Activated naive CD4-positive, alpha-beta T cell treated with anti-CD3 and anti-CD28 coated beads, Interleukin-2, amount 10 ng/mL, durations not matched to agents 7 days and 5 days (primary cell): ENCODE measurements at regions of chr11 and their contacts with region 1.

Region 1: DNA sequence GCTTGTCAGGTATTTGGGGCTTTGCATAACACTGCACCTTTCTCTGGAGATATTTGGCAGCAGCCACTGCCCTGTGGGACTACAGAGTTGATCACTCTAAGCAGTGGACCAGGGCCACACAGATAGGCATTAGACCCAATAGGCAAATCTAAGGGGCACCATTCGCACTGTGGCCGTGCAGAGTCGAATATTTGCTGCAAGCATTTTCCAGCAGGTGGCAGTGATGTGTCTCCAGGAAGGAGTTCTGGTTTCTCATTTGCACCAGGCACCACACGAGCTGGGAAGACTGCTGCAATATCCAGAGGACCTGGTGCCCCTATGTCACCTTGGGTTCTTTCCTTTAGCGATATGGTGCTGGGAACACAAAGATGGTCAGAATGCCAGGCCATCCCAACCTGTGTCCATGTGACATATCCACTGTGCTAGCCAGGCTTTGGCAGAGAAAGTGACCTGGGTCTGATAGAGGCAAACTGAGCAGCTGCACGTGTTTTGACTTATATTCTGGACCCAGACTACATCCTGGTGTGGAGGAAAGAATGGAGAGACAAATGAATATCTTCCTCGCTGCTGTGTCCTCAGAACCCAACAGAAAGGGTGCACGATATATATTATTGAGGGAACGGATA is 318.7 kb downstream of the BUD13 start:
- DNase-seq: peak; percentile 35
- H3K4me3 Mint-ChIP-seq: no peak overlapping the region
- H3K27ac Mint-ChIP-seq: no peak overlapping the region
- H3K4me1 Mint-ChIP-seq: no peaks in the 10 kb centered on the region
- H3K27me3 Mint-ChIP-seq: peaks cover 6% of the 10 kb centered on the region

Region 2: GRCh38 chr11:116641561-116642045 is 187.5 kb after region 1 on chr11:
- CTCF ChIA-PET with region 1: interaction called, 13 read pairs
- DNase-seq: peak; percentile 44
- H3K4me3 Mint-ChIP-seq: no peak overlapping the region
- H3K27ac Mint-ChIP-seq: no peak overlapping the region
- H3K4me1 Mint-ChIP-seq: no peaks in the 10 kb centered on the region
- H3K27me3 Mint-ChIP-seq: no peaks in the 10 kb centered on the region